GM18951 (cell line): ENCODE measurements at regions of chr4 and their contacts with region 1.

Region 1: GRCh38 chr4:39446751-39447573 is 11.8 kb downstream of the RPL9 start:
- POLR2A ChIP-seq: no peak

Region 2: GRCh38 chr4:38759113-38759789 is 687.7 kb before region 1 on chr4:
- in situ Hi-C with region 1: loop called (anchors 25 kb)
- POLR2A ChIP-seq: no peak

Region 3: GRCh38 chr4:38902695-38903094 is 544.3 kb before region 1 on chr4:
- in situ Hi-C with region 1: loop called (anchors 25 kb)
- POLR2A ChIP-seq: no peak